Transverse colon (tissue), 4 donors: ENCODE measurements at regions of chr11 and their contacts with region 1.

Region 1: GRCh38 chr11:110463153-110463552 is 33.4 kb downstream of the FDX1 start:
- DNase-seq: peak; percentile 46
- H3K4me3 ChIP-seq: no peak overlapping the region
- H3K27ac ChIP-seq: no peak overlapping the region
- H3K4me1 ChIP-seq: no peaks in the 10 kb centered on the region
- H3K27me3 ChIP-seq: no peaks in the 10 kb centered on the region
- CTCF ChIP-seq: peak; percentile 24 to 51 (median 40)
- EP300 ChIP-seq: no peak
- POLR2A ChIP-seq: no peak

Region 2: GRCh38 chr11:110337570-110338193 is 125.5 kb before region 1 on chr11:
- in situ Hi-C with region 1: no loop called
- intact Hi-C with region 1: no loop called
- DNase-seq: no peak
- H3K4me3 ChIP-seq: no peak overlapping the region
- H3K27ac ChIP-seq: no peak overlapping the region
- H3K4me1 ChIP-seq: no peaks in the 10 kb centered on the region
- H3K27me3 ChIP-seq: no peaks in the 10 kb centered on the region
- CTCF ChIP-seq: no peak
- EP300 ChIP-seq: no peak
- POLR2A ChIP-seq: no peak

Region 3: GRCh38 chr11:110645253-110645652 is 182.1 kb after region 1 on chr11:
- in situ Hi-C with region 1: no loop called
- intact Hi-C with region 1: no loop called
- DNase-seq: no peak
- H3K4me3 ChIP-seq: no peak overlapping the region
- H3K27ac ChIP-seq: no peak overlapping the region
- H3K4me1 ChIP-seq: no peaks in the 10 kb centered on the region
- H3K27me3 ChIP-seq: no peaks in the 10 kb centered on the region
- CTCF ChIP-seq: no peak
- EP300 ChIP-seq: no peak
- POLR2A ChIP-seq: no peak

Region 4: DNA sequence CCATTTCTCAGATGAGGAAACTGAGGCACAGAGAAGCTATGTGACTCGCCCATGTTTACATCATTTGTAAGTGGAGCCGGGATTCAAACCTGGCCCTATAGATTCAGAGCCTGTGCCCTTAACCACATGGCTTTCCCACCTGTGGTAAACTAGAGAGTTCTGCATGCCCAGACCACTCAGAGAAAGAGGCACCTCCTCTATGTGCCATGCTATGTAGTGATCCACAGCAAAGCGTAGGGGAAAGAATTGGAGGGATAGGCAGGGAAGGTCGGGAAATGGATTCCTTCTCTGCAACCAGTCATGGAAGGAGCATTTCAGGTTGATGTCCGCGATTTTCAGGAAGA is 766.9 kb after region 1 on chr11:
- in situ Hi-C with region 1: loop called in 3 of 4 experiments (anchors 10 to 25 kb)
- intact Hi-C with region 1: no loop called
- DNase-seq: no peak
- H3K4me3 ChIP-seq: peak overlapping the region in 2 of 4 donors; percentile 27 to 61
- H3K27ac ChIP-seq: peak overlapping the region in 1 of 4 donors; percentile 68
- H3K4me1 ChIP-seq: peaks cover 0 to 12% (median 0%) of the 10 kb centered on the region in 4 donors
- H3K27me3 ChIP-seq: no peaks in the 10 kb centered on the region
- CTCF ChIP-seq: no peak
- EP300 ChIP-seq: no peak
- POLR2A ChIP-seq: no peak

Region 5: GRCh38 chr11:111446404-111447111 is 983.4 kb after region 1 on chr11:
- in situ Hi-C with region 1: loop called in 3 of 4 experiments (anchors 10 to 25 kb)
- intact Hi-C with region 1: no loop called
- DNase-seq: peak; percentile 83
- H3K4me3 ChIP-seq: no peak overlapping the region
- H3K27ac ChIP-seq: peak overlapping the region in 1 of 4 donors; percentile 44
- H3K4me1 ChIP-seq: peaks cover 0 to 9% (median 4%) of the 10 kb centered on the region in 4 donors
- H3K27me3 ChIP-seq: no peaks in the 10 kb centered on the region
- CTCF ChIP-seq: peak; percentile 71 to 97 (median 75)
- EP300 ChIP-seq: no peak
- POLR2A ChIP-seq: no peak

Region 6: DNA sequence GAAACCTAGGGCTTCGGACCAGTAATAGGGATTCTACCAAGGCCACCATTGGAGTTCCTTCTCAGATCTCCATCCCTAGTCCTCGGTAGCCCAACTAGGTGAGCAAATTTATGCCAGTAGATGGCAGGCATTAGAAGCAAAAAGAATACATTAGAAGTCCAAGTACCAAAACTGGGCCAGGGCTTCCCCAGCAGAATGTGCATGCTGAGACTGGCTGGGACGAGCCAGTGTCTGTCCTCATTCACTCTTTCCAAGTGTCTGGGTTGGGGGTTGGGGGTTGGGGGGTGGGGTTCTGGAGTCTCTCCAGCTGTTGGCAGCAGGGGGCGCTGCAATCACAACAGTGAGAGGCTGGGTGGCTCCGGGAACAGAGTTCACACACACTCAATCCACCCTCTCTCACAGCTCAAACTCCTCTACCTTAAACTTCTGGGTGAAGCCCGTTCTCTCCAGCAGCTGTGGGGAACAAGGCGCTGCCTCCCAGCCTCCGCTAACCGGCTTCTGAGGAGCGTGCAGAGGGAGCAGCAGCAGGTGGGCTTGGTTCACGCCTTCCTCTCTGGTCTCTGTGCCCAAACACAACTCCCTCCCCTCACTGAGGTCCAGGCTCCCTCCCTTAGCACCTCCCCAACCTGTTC is 991.5 kb after region 1 on chr11:
- in situ Hi-C with region 1: loop called in 3 of 4 experiments (anchors 10 to 25 kb)
- intact Hi-C with region 1: no loop called
- DNase-seq: peak; percentile 46
- H3K4me3 ChIP-seq: no peak overlapping the region
- H3K27ac ChIP-seq: no peak overlapping the region
- H3K4me1 ChIP-seq: no peaks in the 10 kb centered on the region
- H3K27me3 ChIP-seq: peaks cover 11% of the 10 kb centered on the region
- CTCF ChIP-seq: peak in 3 of 5 experiments; percentile 25 to 37 (median 33)
- EP300 ChIP-seq: no peak
- POLR2A ChIP-seq: no peak